Naive thymus-derived CD4-positive, alpha-beta T cell (primary cell): ENCODE measurements at regions of chr17 and their contacts with region 1.

Region 1: GRCh38 chr17:38922538-38923297 is 2.7 kb upstream of the LASP1NB start:
- DNase-seq: peak in 1 of 9 donors; percentile 17
- ATAC-seq: no peak
- H3K4me3 ChIP-seq: no peak overlapping the region
- H3K4me3 Mint-ChIP-seq: no peak overlapping the region
- H3K27ac ChIP-seq: no peak overlapping the region
- H3K27ac Mint-ChIP-seq: peak overlapping the region in 4 of 9 donors; percentile 38 to 93 (median 45)
- H3K4me1 ChIP-seq: peaks cover 12 to 14% of the 10 kb centered on the region in 2 donors
- H3K4me1 Mint-ChIP-seq: peaks cover 29 to 45% (median 31%) of the 10 kb centered on the region in 7 donors
- H3K27me3 ChIP-seq: no peaks in the 10 kb centered on the region
- H3K27me3 Mint-ChIP-seq: no peaks in the 10 kb centered on the region

Region 2: GRCh38 chr17:38809828-38810227 is 112.9 kb before region 1 on chr17:
- CTCF ChIA-PET with region 1: no interaction called
- POLR2A ChIA-PET with region 1: no interaction called
- intact Hi-C with region 1: no loop called
- DNase-seq: no peak
- ATAC-seq: no peak
- H3K4me3 ChIP-seq: no peak overlapping the region
- H3K4me3 Mint-ChIP-seq: no peak overlapping the region
- H3K27ac ChIP-seq: no peak overlapping the region
- H3K27ac Mint-ChIP-seq: no peak overlapping the region
- H3K4me1 ChIP-seq: no peaks in the 10 kb centered on the region
- H3K4me1 Mint-ChIP-seq: peaks cover 0 to 1% (median 0%) of the 10 kb centered on the region in 7 donors
- H3K27me3 ChIP-seq: no peaks in the 10 kb centered on the region
- H3K27me3 Mint-ChIP-seq: no peaks in the 10 kb centered on the region

Region 3: GRCh38 chr17:38898812-38899348 is 23.8 kb before region 1 on chr17:
- CTCF ChIA-PET with region 1: no interaction called
- POLR2A ChIA-PET with region 1: interaction called, 5 read pairs
- intact Hi-C with region 1: loop called in 1 of 2 experiments (anchors 2 kb)
- DNase-seq: peak; percentile 48 to 84 (median 73)
- ATAC-seq: peak; percentile 89
- H3K4me3 ChIP-seq: peak overlapping the region; percentile 46
- H3K4me3 Mint-ChIP-seq: peak overlapping the region; percentile 77 to 93 (median 83)
- H3K27ac ChIP-seq: peak overlapping the region; percentile 81
- H3K27ac Mint-ChIP-seq: peak overlapping the region; percentile 86 to 100 (median 98)
- H3K4me1 ChIP-seq: peaks cover 60 to 85% of the 10 kb centered on the region in 2 donors
- H3K4me1 Mint-ChIP-seq: peaks cover 30 to 71% (median 65%) of the 10 kb centered on the region in 7 donors
- H3K27me3 ChIP-seq: no peaks in the 10 kb centered on the region
- H3K27me3 Mint-ChIP-seq: no peaks in the 10 kb centered on the region

Region 4: DNA sequence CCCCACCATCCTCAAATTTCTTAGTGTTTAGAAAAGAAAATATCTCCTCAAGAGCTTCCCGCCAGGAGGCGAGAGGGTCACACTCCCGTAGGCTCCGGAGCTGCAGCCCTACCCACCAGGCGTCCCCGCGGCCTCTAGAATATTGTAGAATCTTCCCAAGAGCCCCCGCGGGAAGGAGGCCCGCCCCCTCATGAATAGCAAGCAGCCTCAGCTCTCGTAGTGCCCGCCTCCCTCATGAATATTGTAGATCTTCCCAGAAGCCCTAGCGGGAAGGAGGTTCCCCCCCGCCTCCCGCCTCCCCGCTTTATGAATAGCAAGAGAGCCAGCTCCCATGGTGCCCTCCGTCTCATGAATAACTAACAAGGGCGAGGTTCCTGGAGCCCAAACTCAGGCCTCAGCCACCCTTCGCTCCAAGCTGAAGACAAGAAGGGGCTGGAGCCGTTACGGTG is 44.6 kb after region 1 on chr17 and contains the start of gene FBXO47:
- CTCF ChIA-PET with region 1: no interaction called
- POLR2A ChIA-PET with region 1: no interaction called
- intact Hi-C with region 1: loop called in 1 of 2 experiments (anchors 2 kb)
- DNase-seq: peak; percentile 38 to 86 (median 77)
- ATAC-seq: peak; percentile 99
- H3K4me3 ChIP-seq: peak within 1 kb of the TSS; percentile 43
- H3K4me3 Mint-ChIP-seq: peak within 1 kb of the TSS; percentile 55 to 84 (median 81)
- H3K27ac ChIP-seq: peak within 1 kb of the TSS; percentile 59
- H3K27ac Mint-ChIP-seq: peak within 1 kb of the TSS; percentile 31 to 96 (median 69)
- H3K4me1 ChIP-seq: peaks cover 0 to 16% of the 10 kb centered on the region in 2 donors
- H3K4me1 Mint-ChIP-seq: peaks cover 11 to 28% (median 15%) of the 10 kb centered on the region in 7 donors
- H3K27me3 ChIP-seq: no peaks in the 10 kb centered on the region
- H3K27me3 Mint-ChIP-seq: peaks cover 0 to 2% (median 0%) of the 10 kb centered on the region in 5 donors
- total RNA-seq, gene FBXO47: not detected

Region 5: DNA sequence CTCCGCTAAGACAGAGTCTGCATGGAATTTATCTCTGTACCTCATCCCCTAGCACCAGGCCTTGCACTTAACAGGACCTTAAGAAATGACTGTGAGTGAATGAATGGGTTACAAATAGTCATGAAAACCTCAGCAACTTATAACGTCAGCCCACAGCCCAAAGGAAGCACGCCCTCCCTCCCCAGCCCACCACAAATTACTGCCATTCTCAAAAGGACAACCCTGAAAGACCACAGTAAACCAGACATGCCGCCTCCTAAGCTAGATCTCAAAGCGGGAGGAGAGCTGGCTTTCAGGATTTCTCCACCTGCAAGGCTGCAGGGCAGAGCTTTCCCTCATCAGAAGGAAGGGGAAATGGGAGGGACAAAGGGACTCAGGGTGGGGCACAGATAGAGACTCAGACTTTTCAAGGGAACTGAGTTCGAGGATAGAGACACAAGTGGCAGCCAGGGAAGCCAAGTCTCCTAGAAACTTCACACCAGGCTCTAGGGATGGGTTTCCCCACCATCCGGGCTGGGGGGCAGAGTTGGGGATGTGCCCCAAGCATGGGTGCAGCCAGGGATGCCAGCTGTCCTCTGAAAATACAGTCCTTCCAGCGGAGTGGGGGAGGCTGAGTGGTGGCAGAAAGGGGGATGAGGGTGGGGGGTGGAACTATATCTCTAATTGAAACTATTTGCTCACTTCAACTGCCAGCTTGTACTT is 172.0 kb after region 1 on chr17:
- CTCF ChIA-PET with region 1: no interaction called
- POLR2A ChIA-PET with region 1: no interaction called
- intact Hi-C with region 1: loop called in 1 of 2 experiments (anchors 1 kb)
- DNase-seq: peak in 7 of 9 donors; percentile 28 to 62 (median 49)
- ATAC-seq: peak; percentile 60
- H3K4me3 ChIP-seq: peak overlapping the region; percentile 20
- H3K4me3 Mint-ChIP-seq: peak overlapping the region; percentile 61 to 92 (median 82)
- H3K27ac ChIP-seq: peak overlapping the region; percentile 64
- H3K27ac Mint-ChIP-seq: peak overlapping the region; percentile 81 to 97 (median 95)
- H3K4me1 ChIP-seq: peaks cover 60 to 88% of the 10 kb centered on the region in 2 donors
- H3K4me1 Mint-ChIP-seq: peaks cover 64 to 95% (median 90%) of the 10 kb centered on the region in 7 donors
- H3K27me3 ChIP-seq: no peaks in the 10 kb centered on the region
- H3K27me3 Mint-ChIP-seq: peaks cover 0 to 3% (median 0%) of the 10 kb centered on the region in 5 donors

Region 6: DNA sequence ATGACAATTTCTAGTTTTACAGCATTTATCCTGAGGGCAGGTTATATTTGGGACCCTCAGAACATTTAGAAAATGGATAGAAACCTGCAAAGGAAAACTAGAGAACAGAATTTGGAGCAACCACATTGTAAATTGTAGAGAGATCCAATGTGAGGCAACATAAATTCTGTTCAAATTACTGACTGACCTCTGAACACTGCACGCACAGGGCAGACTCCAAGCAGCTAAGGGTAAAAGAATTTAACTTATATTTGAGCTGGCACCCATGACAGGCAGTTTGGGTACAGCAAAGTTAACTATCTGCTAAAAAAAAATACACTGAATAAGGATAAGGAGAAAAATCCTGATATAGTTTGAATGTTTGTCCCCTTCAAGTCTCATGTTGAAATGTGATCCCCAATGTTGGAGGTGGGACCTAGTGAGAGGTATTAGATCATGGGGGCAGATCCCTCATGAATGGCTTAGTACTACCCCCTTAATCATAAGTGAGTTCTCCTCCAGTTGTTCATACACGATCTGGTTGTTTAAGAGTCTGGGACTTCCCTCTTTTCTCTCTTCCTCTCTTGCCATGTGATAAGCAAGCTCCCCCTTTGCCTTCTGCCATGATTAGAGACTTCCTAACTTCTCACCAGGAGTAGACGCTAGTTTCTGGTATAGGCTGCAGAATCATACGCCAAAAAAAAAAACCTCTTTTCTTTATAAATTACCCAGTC is 403.0 kb after region 1 on chr17:
- CTCF ChIA-PET with region 1: no interaction called
- POLR2A ChIA-PET with region 1: no interaction called
- intact Hi-C with region 1: no loop called
- DNase-seq: no peak
- ATAC-seq: peak; percentile 32
- H3K4me3 ChIP-seq: no peak overlapping the region
- H3K4me3 Mint-ChIP-seq: no peak overlapping the region
- H3K27ac ChIP-seq: no peak overlapping the region
- H3K27ac Mint-ChIP-seq: peak overlapping the region in 2 of 9 donors; percentile 40 to 57
- H3K4me1 ChIP-seq: no peaks in the 10 kb centered on the region
- H3K4me1 Mint-ChIP-seq: peaks cover 0 to 16% (median 4%) of the 10 kb centered on the region in 7 donors
- H3K27me3 ChIP-seq: no peaks in the 10 kb centered on the region
- H3K27me3 Mint-ChIP-seq: no peaks in the 10 kb centered on the region